Right ventricle myocardium inferior (tissue), 1 donor: ENCODE measurements at regions of chr1 and their contacts with region 1.

Region 1: DNA sequence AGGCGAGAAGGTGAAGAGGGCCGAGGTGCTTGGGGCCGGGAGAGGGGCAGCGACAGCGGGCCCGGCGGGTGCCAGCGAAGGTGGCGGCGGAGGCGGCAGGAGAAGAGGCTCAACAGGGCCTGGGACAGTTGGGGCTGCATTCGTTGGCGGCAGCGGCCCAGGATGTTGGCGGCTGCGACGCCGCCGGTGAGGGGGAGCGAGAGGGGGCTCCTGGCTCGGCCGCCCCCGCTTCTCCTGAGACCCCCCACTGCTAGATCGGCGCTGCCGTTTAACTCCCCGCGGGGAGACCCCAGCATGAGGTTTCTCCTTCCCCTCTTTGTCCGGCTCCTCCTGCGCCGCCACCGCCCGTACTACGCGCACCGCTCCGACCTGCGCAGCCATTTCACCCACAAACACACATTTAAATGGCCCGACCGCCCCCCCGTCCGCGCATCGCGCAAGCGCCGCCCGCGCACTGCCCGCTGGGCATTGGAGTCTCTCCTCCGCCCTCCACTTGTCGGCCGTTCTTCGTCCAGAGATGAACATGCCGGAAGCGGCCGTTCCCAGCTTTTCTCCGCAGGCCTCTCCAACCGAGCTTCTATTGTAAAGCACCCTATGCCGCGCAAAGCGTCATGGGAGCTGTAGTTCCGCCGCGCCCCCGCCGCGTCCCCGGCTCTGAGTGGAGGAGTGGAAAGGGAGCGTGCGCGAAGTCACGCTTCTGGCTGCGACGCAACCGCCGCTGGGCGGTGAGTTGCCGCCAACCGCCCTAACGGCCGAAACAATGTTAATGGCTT is at the start of gene RSBN1:
- DNase-seq: peak; percentile 100
- ATAC-seq: peak; percentile 98
- total RNA-seq, gene RSBN1: 10.1 TPM

Region 2: GRCh38 chr1:113759333-113760101 is 52.6 kb before region 1 on chr1 and contains the start of gene PHTF1:
- intact Hi-C with region 1: loop called (anchors 1 kb)
- DNase-seq: peak; percentile 86
- ATAC-seq: peak; percentile 94
- total RNA-seq, gene PHTF1: 6.4 TPM

Region 3: GRCh38 chr1:113793878-113794834 is 17.9 kb before region 1 on chr1:
- intact Hi-C with region 1: no loop called
- DNase-seq: no peak
- ATAC-seq: peak; percentile 78

Region 4: DNA sequence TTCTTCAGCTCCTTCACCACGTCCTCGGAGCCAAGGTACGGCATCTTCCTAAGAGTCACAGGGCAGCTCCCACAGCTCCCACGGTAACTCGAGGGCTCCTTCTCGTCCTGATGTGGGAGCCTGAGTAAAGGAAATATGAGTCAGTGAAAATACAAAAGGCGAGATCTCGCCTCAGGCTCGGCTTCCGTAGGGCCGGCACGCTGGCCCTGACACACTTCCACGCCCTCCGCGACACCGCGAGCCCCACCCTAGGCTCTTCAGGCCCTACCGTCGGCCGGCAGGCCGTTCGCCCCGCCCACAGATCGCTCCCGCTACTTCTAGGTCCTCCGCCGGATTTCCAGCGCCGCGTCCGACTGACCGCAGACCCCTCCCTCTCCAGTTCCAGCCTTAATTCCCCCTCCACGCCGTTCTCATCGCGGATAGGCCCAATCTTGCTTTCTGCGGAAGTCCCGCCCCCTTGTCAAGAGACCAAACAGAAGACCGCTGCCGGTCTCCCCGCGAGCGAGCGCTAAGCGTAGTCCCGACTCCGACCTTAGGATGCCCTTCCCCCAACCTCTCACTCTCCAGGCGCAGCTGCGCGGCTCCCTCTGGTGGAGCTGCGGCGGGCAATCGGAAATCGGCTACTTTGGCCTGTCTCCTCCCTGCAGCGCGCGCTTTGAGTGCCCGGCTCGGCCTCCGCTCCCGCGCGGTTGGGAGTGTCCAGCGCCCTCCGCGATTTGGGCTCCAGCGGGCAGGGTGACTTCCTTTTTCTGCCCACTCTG is 92.8 kb after region 1 on chr1 and contains the starts of genes AP4B1 and DCLRE1B:
- intact Hi-C with region 1: loop called (anchors 1 kb)
- DNase-seq: peak; percentile 100
- ATAC-seq: peak; percentile 99
- total RNA-seq, gene AP4B1: 12.2 TPM
- total RNA-seq, gene DCLRE1B: 2.4 TPM

Region 5: DNA sequence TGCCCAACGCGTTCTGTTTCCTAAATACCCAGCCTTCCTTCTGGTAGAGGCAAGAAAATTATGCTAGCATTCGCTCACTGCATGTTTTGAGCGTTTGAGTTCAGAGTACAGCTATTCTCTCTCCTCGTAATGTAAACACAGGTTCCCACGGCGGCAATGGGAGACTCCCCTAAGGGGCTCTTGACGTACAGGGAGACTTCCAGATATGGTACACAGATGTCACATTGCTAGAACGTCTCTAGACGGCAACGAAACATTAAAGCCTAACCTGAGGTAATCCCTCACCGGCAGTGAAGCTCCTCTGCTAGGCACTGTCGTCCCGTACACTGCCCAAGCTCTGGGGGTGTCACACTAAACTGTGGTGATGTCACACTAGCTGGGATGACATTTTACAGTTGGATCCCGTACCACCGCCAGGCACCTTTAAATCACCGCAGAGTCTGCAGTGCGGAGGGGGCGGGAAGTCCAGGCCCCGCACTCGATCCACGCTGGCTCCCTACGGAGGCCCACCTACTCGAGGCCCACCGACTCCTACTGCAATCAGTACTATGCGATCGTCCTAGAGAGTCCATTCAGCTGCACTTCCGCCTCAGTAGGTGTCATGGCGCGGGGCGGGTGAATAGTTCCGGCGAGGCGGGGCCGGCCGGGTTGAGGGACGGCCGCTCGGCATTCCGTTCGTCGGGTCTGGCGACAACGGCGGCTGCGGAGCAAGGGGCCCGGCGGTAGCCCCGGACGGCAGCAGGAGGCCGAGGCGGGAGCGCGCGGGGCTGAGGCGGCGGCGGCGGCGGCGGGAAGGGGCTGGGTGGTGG is 117.1 kb after region 1 on chr1 and contains the start of gene HIPK1:
- intact Hi-C with region 1: loop called (anchors 1 kb)
- DNase-seq: peak; percentile 98
- ATAC-seq: peak; percentile 93
- total RNA-seq, gene HIPK1: 50.3 TPM